ENCODE measurements at regions of chr6 and their contacts with region 1.

Region 1: GRCh38 chr6:122730775-122731386 is 48.6 kb upstream of the FABP7 start:
- DNase-seq: no peak
- H3K4me3 Mint-ChIP-seq: no peak overlapping the region
- H3K27ac Mint-ChIP-seq: no peak overlapping the region
- H3K4me1 Mint-ChIP-seq: no peaks in the 10 kb centered on the region
- H3K27me3 Mint-ChIP-seq: peaks cover 4% of the 10 kb centered on the region

Region 2: DNA sequence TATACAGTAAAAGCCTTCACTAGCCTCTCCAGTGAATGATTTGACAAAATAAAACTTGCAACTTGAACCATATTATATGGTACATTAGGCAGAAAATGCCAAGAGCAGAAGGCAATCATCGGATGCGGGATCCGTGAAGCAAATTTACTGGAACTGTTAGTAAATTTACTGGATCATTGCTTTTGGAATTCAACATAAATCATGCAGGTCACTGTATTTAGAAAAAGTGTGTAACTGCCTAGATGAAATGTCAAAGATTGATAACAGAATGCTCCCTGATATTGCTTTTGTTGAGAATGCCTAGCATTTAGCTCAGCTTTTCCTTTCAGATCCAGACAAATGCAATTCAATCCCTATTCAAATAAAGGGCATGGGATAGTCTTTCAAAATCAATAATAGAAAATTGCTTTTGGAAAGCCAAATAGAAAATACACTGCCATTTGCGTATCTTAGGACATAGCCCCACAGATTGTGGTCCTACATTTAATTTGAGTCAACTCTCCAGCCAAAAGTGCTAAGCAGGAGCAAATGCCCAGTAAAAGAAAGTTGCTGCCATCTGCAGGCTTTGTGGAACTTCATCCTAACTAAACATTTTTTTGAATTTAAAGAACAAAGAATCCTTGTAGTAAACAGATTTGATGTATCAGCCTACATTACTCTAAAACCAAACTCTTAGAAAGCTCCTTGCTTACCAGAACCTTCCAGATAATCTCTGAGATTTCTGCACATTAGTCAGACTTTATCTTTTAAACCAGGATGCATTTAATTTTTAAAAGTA is 440.9 kb before region 1 on chr6:
- intact Hi-C with region 1: no loop called
- DNase-seq: no peak
- H3K4me3 Mint-ChIP-seq: no peak overlapping the region
- H3K27ac Mint-ChIP-seq: no peak overlapping the region
- H3K4me1 Mint-ChIP-seq: no peaks in the 10 kb centered on the region
- H3K27me3 Mint-ChIP-seq: no peaks in the 10 kb centered on the region

Region 3: DNA sequence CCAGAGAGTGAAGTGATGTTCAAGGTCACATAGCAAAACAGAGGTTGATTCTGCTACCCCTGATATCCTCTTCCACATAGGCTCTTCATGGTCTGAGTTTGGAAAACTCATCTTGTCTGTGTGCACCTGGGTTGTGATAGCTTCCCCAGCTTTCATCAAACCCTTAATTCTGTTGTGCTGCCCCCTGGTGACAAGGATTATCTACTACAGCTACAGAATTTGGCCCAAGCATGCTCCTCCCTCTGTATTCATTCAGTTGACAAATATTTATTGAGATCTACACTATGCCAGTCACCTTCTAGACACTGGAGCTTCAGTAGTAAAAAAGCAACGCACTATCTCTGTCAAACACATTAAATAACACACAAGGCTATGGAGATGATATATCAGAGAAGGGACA is 108.6 kb after region 1 on chr6:
- intact Hi-C with region 1: loop called (anchors 1 kb)
- DNase-seq: peak; percentile 31
- H3K4me3 Mint-ChIP-seq: no peak overlapping the region
- H3K27ac Mint-ChIP-seq: no peak overlapping the region
- H3K4me1 Mint-ChIP-seq: no peaks in the 10 kb centered on the region
- H3K27me3 Mint-ChIP-seq: peaks cover 7% of the 10 kb centered on the region

Region 4: DNA sequence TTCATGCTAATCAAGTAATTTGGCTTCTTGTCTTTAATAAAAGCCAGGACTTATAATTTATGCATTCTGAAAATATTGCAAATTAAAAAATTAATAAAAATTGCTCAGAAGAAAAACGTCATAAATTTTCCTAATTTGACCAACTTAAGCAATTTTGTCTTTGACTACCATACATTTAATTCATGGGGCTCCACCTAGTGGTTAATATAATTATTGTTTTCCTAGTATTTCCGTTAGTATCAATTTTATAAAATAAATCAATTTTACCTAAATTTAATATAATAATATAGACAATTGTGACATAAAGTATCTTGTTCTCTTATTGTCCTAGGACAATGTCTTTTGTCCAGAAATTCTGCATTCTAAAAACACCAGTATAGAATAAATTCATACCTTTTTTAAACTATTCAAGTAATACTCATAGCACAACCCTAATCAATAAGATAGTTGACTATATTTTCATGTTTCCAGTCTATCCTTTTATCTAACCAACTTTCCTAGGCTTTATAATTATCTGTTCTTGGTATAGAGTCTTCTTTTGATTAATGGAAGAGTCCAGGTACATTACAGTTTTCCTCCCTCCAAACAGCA is 585.9 kb after region 1 on chr6:
- intact Hi-C with region 1: loop called (anchors 1 kb)
- DNase-seq: no peak
- H3K4me3 Mint-ChIP-seq: no peak overlapping the region
- H3K27ac Mint-ChIP-seq: no peak overlapping the region
- H3K4me1 Mint-ChIP-seq: no peaks in the 10 kb centered on the region
- H3K27me3 Mint-ChIP-seq: no peaks in the 10 kb centered on the region